ENCODE measurements at regions of chr2 and their contacts with region 1.

Region 1: DNA sequence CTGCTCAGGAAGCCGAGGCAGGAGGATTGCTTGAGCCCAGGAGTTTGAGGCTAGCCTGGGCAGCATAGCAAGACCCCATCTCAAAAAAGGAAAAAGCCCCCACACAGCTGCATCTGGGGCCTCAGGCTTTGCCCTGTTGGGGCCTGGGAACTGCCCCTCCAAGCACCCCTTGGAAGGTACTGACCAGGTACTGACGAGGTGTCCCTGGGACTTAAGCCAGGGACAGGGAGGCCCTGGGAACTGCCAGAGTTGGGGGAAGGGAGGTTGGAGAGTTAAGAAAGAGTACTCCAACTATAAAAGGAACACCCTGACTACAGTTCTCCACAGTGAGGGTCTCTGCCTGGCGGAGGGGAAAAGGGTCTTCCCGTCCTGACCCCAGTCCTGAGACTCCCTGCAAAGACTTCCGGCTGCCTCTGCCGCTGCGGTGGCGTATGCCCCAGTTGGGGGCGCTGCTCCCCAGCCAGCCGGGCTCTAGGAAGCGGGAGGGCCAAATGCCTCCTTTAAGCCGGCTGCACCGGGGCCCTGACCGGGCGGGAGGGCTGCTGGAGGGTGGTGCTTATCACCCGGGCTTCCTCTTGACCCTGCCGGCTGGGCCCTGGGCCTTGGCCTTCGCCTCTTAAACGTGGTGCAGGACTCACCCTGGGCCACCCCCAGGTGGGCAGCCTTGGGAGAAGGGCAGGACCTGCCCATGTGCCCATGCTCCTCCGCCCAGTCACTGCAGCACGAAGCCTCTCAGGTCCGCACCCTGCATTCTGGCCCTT is 12.8 kb downstream of the SLC30A3 start:
- DNase-seq: peak in 1 of 2 experiments; percentile 73
- H3K4me3 ChIP-seq: no peak overlapping the region
- H3K4me3 Mint-ChIP-seq: no peak overlapping the region
- H3K27ac Mint-ChIP-seq: no peak overlapping the region
- H3K4me1 ChIP-seq: no peaks in the 10 kb centered on the region
- H3K4me1 Mint-ChIP-seq: no peaks in the 10 kb centered on the region
- H3K27me3 ChIP-seq: no peaks in the 10 kb centered on the region
- H3K27me3 Mint-ChIP-seq: no peaks in the 10 kb centered on the region
- CTCF ChIP-seq: peak; percentile 47 to 78

Region 2: DNA sequence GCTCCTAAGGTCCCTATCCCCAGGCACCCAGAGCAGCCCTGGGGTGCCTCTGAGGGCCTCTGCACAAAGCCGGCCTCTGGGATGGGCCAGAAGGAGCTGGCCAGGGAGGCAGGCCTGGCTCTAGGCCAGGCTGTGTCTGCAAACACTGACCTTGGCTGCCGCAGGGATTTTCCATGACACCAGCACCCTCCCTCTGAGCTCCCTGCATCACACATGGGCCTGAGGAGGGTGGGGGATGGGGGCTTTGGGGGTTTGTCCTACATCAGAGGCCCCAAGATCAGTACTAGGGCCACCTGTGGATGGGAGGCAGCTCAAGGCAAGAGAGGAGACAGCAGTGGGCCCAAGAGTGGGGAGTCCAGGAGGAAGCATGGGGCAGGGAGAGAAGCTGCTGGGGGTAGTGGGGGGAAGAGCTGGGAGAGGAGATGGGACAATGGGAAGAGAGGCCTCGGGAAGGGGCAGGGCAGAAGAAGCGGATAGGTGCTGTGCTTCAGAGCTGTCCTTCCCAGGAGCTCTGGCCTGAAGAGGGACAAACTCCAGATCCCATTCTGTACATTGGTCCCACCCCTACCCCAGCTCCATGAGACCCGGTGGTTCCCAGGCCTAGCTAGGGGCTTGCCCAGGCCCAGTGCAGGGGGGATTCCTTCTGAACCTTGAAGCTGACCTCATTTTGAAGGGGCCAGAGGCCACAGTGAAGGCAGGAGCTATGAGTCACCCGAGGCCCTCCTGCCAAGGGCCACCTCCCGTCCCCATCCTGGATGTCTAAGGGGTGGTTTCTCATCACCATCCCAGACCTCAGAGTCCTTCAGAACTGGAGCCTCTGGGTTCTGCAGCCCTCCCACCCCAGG is 529.5 kb before region 1 on chr2:
- CTCF ChIA-PET with region 1: no interaction called
- POLR2A ChIA-PET with region 1: no interaction called
- intact Hi-C with region 1: no loop called
- DNase-seq: no peak
- H3K4me3 ChIP-seq: no peak overlapping the region
- H3K4me3 Mint-ChIP-seq: no peak overlapping the region
- H3K27ac Mint-ChIP-seq: no peak overlapping the region
- H3K4me1 ChIP-seq: peaks cover 35% of the 10 kb centered on the region
- H3K4me1 Mint-ChIP-seq: peaks cover 8% of the 10 kb centered on the region
- H3K27me3 ChIP-seq: no peaks in the 10 kb centered on the region
- H3K27me3 Mint-ChIP-seq: no peaks in the 10 kb centered on the region
- CTCF ChIP-seq: no peak

Region 3: GRCh38 chr2:27143285-27143684 is 106.8 kb before region 1 on chr2:
- CTCF ChIA-PET with region 1: no interaction called
- POLR2A ChIA-PET with region 1: no interaction called
- intact Hi-C with region 1: no loop called
- DNase-seq: peak in 1 of 2 experiments; percentile 17
- H3K4me3 ChIP-seq: no peak overlapping the region
- H3K4me3 Mint-ChIP-seq: no peak overlapping the region
- H3K27ac Mint-ChIP-seq: no peak overlapping the region
- H3K4me1 ChIP-seq: no peaks in the 10 kb centered on the region
- H3K4me1 Mint-ChIP-seq: no peaks in the 10 kb centered on the region
- H3K27me3 ChIP-seq: no peaks in the 10 kb centered on the region
- H3K27me3 Mint-ChIP-seq: peaks cover 3% of the 10 kb centered on the region
- CTCF ChIP-seq: no peak

Region 4: DNA sequence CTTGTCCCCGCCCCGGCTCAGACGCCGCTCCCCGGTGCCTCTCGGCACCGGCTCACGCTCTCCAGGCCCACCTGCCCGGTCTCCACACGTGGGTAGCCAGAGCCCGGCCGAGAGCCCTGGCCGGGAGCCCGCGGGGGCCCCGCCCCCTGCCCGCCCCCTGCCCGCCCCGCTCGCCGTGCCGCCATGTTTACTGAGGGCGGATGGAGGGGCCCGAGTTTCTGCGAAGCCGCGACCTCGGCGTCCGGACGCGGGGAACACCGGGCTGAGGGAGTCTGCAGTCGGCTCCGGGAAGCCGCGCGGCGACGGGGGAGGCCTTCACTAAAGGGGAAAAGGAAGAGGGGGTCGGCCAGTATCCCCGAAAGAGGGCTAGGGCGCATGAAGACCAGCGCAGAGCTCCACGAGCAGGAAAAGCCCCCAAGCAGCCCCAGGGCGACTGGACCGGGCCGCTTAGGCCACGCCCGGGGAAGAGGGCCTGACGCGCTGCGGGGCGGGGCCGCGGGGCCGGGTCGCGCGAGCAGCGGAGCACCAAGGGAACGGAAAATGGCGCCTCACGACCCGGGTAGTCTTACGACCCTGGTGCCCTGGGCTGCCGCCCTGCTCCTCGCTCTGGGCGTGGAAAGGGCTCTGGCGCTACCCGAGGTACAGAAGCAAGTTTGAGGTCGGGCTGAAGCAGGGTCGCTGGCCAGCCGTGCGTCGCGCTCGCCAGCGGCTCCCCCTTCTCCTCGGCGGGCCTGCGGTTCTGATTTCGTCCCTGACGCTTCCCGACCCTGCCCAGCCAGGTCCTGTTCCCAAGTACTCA is 38.0 kb before region 1 on chr2 and contains the starts of genes ATRAID and SLC5A6:
- CTCF ChIA-PET with region 1: no interaction called
- POLR2A ChIA-PET with region 1: no interaction called
- intact Hi-C with region 1: no loop called
- DNase-seq: peak; percentile 92 to 96
- H3K4me3 ChIP-seq: peak within 1 kb of the TSS; percentile 58
- H3K4me3 Mint-ChIP-seq: peak within 1 kb of the TSS; percentile 98
- H3K27ac Mint-ChIP-seq: peak within 1 kb of the TSS; percentile 100
- H3K4me1 ChIP-seq: peaks cover 30% of the 10 kb centered on the region
- H3K4me1 Mint-ChIP-seq: peaks cover 29% of the 10 kb centered on the region
- H3K27me3 ChIP-seq: no peaks in the 10 kb centered on the region
- H3K27me3 Mint-ChIP-seq: no peaks in the 10 kb centered on the region
- CTCF ChIP-seq: no peak
- total RNA-seq, gene ATRAID: 150 and 157 TPM in 2 replicates
- total RNA-seq, gene SLC5A6: 93.7 and 98.2 TPM in 2 replicates

Region 5: DNA sequence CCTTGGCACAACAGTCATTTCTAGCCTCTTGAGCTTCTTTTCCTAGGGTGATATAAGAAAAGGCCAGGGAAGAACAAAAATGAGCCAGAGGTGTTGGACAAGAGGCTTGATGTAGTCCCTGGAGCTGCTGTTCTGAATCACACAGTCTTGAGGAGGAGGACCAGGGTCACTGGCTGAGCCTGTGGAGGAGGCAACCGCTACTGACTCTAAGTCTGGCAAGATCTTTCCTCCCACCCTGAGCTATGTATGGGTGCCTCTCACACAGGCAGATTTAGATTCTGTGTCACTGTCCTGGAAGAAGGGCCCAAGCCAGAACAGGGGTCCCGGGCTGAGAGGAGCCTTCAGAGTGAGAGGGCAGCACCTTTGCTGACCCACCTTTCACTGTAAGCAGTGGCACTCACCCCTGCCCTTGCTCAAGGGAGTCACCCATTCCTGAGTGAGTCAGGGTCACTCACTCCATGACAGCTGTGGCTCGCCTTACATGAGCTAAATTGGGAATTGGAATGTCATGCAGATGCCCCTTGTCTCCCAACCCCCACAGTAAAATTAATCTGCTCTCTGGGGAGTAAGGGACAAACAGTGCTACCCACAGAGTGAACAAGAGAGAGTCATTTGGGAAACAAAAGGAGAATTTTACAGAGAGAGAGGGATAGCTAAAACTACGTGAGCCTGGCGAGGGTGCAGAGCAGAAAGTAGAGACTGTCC is 31.9 kb after region 1 on chr2 and contains the start of gene TRIM54:
- CTCF ChIA-PET with region 1: interaction called, 8 read pairs
- POLR2A ChIA-PET with region 1: no interaction called
- intact Hi-C with region 1: loop called (anchors 1 kb)
- DNase-seq: no peak
- H3K4me3 ChIP-seq: no peak within 1 kb of the TSS
- H3K4me3 Mint-ChIP-seq: no peak within 1 kb of the TSS
- H3K27ac Mint-ChIP-seq: peak within 1 kb of the TSS; percentile 68
- H3K4me1 ChIP-seq: peaks cover 7% of the 10 kb centered on the region
- H3K4me1 Mint-ChIP-seq: peaks cover 16% of the 10 kb centered on the region
- H3K27me3 ChIP-seq: no peaks in the 10 kb centered on the region
- H3K27me3 Mint-ChIP-seq: no peaks in the 10 kb centered on the region
- CTCF ChIP-seq: no peak
- total RNA-seq, gene TRIM54: 0.25 TPM in 1 of 2 replicates, not detected in the other